GM10248 (cell line): ENCODE measurements at regions of chr7 and their contacts with region 1.

Region 1: GRCh38 chr7:150898475-150899011 is 46.2 kb downstream of the AOC1 start:
- DNase-seq: peak; percentile 84
- CTCF ChIP-seq: peak; percentile 96

Region 2: DNA sequence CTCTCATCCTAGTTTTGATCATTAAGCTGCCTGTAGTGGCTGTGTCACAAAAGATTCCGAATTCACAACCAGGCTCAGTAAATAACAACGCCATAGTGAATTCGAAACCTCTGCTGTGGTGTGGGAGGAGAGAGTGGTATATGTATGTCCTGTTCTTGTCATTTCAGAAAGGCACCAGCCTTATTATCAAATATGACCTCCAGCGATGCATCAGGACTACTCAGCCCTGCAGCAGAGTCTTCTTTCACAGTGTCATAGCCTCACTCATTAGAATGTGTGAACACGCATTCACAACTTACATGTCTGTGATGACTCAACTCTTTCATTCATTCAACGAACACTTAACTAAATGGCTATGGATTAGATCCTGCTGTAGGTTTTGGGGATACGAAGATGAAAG is 30.9 kb before region 1 on chr7:
- CTCF ChIA-PET with region 1: interaction called, 13 read pairs
- POLR2A ChIA-PET with region 1: no interaction called
- DNase-seq: no peak
- CTCF ChIP-seq: no peak

Region 3: DNA sequence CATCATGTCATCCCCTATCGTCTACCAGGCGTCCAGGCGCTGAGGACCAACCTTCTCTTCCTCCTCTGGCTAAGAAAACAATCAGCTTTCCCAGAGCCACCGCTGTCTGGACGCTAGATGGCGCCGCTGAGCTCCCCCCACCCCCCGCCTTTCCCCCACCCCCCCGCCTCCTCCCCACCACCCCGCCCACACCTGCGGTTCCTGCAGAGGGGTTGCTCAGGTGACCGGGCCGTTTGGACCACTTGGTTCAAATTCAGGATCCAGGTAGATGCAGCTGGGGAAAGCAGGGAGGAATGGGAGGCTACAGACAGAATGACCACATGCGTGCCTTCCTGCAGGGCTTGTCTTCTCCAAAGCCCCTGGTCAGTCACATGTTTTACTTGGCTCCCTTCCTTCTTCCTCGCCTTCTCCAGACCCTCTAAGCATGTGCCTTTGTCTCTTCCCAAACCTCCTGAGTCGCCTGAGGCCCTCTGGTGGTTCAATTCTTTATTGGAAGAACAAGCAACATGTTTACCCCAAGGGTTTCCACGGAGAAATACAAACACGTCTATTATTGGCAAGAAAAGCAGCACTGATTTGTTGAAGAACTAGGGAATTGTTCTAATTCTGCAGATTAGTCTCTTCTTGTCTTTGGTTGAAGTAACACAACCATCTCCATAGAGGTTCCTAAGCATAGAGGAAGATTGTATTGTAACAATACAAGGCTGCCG is 21.6 kb before region 1 on chr7:
- CTCF ChIA-PET with region 1: interaction called, 48 read pairs
- POLR2A ChIA-PET with region 1: no interaction called
- DNase-seq: peak; percentile 74
- CTCF ChIP-seq: peak; percentile 39

Region 4: GRCh38 chr7:150909200-150909995 is 10.9 kb after region 1 on chr7:
- CTCF ChIA-PET with region 1: interaction called, 25 read pairs
- POLR2A ChIA-PET with region 1: no interaction called
- DNase-seq: no peak
- CTCF ChIP-seq: no peak

Region 5: DNA sequence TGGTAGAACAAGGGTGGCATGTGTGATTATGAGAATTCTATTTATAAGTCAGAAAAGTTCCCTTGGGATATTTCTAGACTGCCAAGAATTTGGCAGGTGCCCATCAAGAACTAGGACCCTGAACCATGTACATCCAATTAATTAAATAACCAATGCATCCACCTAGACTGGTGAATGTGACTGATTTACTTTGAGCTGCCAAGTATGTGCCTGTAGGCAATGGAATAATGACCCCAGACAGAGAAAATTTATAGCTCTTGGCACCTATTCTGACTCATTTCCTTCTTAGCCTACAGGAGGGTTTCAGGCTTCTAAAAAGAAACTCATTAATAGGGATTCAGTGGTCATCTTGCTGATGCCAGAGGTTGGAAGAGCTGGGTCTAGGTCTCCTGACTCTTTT is 24.7 kb after region 1 on chr7:
- CTCF ChIA-PET with region 1: interaction called, 10 read pairs
- POLR2A ChIA-PET with region 1: no interaction called
- DNase-seq: no peak
- CTCF ChIP-seq: no peak

Region 6: DNA sequence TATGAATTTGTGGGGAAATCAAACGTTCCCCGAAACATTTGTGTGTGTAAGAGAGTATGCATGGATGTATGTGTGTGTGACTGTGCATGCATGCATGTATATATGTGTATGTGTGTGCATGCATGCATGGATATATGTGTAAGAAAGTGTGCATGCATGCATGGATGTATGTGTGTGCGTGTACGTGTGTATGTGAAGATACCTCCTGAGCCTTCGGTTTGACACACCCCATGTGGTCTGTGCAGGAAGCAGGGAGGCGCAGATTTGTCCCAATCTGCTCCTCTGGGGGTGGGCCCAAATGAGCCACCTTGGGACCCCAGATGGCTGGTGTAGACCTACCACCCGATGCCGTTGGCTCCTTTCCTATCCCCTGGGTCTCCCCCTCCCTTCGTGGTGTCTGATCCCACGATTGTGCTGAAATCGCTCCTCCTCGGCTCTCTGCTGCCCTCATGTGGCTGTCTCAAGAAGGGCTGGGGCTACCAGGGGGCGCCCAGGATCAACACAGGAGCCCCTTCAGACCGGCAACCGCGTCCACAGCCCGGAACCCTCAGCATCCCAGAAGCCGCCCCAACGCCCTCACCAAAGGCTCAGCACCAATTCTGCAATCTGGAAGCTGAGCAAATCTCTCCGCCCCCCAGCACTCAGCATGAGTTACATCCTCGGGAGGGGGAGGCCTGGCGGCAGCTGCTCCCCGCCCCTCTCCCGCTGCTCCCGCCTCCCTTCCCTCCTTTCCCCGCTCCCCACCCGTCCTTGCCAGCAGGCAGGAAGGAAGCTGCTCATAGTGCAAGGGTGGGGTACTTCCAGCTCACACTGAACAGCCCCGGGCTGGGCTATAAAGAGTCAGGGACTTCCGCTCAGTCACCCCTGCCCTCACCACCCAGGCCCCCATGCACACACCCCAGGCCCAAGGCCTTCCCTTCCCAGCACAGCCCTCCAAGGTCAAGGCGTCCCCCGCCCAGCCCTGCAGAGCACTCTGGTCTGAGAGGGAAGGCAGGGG is 90.0 kb after region 1 on chr7:
- CTCF ChIA-PET with region 1: interaction called, 21 read pairs
- POLR2A ChIA-PET with region 1: no interaction called
- DNase-seq: peak; percentile 78
- CTCF ChIP-seq: peak; percentile 73